Dendritic cell treated with granulocyte-macrophage colony-stimulating factor and Interleukin-4, amounts not matched to agents 40 ng/mL and 50 ng/mL, for 4 days (primary cell): ENCODE measurements at regions of chr2 and their contacts with region 1.

Region 1: GRCh38 chr2:121722479-121722878 is 14.2 kb downstream of the NIFK start:
- H3K4me3 Mint-ChIP-seq: no peak overlapping the region
- H3K27ac Mint-ChIP-seq: no peak overlapping the region
- H3K4me1 Mint-ChIP-seq: peaks cover 25% of the 10 kb centered on the region
- H3K27me3 Mint-ChIP-seq: no peaks in the 10 kb centered on the region

Region 2: DNA sequence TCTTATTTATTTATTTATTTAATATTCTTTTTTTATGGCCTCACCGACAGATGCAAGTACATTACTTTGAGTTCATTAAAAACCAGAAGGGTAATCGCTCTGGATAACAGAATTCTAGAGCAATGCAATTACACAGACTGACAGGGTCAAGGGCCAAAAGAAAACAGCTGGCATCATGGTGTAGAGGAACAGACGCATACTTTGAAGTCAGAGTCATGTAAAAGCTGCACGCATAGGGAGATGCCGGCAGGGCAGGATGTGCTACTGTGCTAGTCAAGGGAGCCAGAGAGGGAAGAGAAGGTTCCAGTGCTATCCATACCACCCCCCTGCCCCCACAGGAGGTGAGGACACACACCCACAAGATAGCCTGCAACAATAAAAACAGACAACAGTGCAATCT is 322.3 kb before region 1 on chr2:
- intact Hi-C with region 1: loop called (anchors 2 kb)
- H3K4me3 Mint-ChIP-seq: no peak overlapping the region
- H3K27ac Mint-ChIP-seq: no peak overlapping the region
- H3K4me1 Mint-ChIP-seq: no peaks in the 10 kb centered on the region
- H3K27me3 Mint-ChIP-seq: no peaks in the 10 kb centered on the region

Region 3: DNA sequence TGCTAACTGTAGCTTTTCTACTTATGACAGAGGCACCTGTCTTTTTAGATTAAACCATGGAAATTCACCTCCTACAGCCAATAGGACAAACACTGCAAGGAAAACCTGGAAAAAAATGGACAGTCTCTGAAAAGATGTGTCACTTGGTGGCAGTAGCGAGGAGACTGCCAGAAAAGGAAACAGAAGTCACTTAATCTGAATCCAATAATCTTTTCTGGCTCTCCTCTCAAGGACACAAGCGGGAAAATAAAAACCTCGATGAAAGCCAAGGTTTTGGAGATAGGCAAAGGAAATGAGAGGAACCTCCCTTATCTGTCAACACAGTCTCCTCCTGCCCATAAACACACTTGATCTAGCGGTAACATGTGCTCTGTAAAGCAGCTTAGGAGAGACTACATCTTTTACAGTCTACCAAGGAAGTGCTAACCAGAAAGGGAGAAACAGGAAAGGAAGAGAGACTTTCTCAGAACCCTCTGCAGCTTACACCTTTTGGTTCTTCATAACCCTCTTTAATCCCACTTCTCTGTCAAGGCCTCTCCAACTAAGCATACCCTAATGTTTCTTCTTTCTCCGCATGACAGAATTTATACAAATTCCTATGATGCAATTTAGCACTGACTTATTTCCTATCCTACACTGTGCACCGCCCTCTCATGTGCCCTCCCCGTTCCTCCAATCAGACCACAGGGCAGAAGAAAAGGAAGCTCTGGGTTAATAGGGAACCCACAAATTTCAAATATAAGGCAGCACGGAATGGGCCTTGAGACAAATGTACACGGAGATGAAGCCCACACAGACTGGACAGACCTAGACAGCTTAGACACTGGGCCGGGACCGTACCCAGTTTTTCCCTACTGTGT is 126.0 kb before region 1 on chr2:
- intact Hi-C with region 1: loop called (anchors 5 kb)
- H3K4me3 Mint-ChIP-seq: peak overlapping the region; percentile 69
- H3K27ac Mint-ChIP-seq: peak overlapping the region; percentile 83
- H3K4me1 Mint-ChIP-seq: peaks cover 32% of the 10 kb centered on the region
- H3K27me3 Mint-ChIP-seq: no peaks in the 10 kb centered on the region